ENCODE measurements at regions of chr7 and their contacts with region 1.

Region 1: DNA sequence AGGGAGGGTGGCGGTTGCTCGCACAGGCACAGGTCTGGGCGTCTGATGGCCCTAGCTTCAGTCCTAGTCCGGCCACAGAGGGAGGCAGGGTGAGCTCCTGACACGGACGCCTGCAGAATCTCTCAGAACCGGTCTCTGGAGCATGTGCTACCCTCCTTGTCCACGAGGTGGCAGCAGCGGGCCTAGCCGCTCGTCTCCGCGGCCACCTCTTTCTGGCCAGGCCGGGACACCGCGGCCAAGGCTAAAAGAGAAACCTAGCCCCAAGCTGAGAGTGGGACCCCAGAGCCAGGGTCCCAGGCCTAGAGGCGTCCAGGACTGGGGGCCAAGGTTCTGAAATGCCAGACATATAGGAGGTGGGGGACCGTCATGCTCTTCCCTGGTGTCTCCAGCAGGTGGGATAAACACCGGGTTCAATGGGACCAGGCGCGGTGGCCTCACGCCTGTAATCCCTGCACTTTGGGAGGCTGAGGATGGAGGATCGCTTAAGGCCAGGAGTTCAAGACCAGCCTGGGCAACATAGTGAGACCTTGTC is 3.2 kb upstream of the LAT2 start:
- DNase-seq: no peak
- ATAC-seq: peak; percentile 35
- H3K4me3 ChIP-seq: peak overlapping the region; percentile 44; the same call in 1 of the 2 replicates
- H3K27ac ChIP-seq: 0 out of 2 replicates have a peak overlapping the region, but pooled peaks have one; percentile 7
- H3K4me1 ChIP-seq: peaks cover 36% of the 10 kb centered on the region
- H3K27me3 ChIP-seq: no peaks in the 10 kb centered on the region
- CTCF ChIP-seq: peak; percentile 93 to 95 (median 93)
- EP300 ChIP-seq: no peak
- POLR2A ChIP-seq: no peak
- RAD21 ChIP-seq: peak; percentile 86

Region 2: GRCh38 chr7:73894733-73895551 is 311.7 kb before region 1 on chr7:
- CTCF ChIA-PET with region 1: no interaction called
- POLR2A ChIA-PET with region 1: no interaction called
- RAD21 ChIA-PET with region 1: no interaction called
- SMC1A ChIA-PET with region 1: no interaction called
- in situ Hi-C with region 1: no loop called
- intact Hi-C with region 1: no loop called
- DNase-seq: no peak
- ATAC-seq: no peak
- H3K4me3 ChIP-seq: no peak overlapping the region
- H3K27ac ChIP-seq: no peak overlapping the region
- H3K4me1 ChIP-seq: no peaks in the 10 kb centered on the region
- H3K27me3 ChIP-seq: no peaks in the 10 kb centered on the region
- CTCF ChIP-seq: no peak
- EP300 ChIP-seq: no peak
- POLR2A ChIP-seq: no peak
- RAD21 ChIP-seq: no peak

Region 3: GRCh38 chr7:73960548-73960947 is 246.1 kb before region 1 on chr7:
- CTCF ChIA-PET with region 1: no interaction called
- POLR2A ChIA-PET with region 1: no interaction called
- RAD21 ChIA-PET with region 1: no interaction called
- SMC1A ChIA-PET with region 1: no interaction called
- in situ Hi-C with region 1: no loop called
- intact Hi-C with region 1: no loop called
- DNase-seq: no peak
- ATAC-seq: no peak
- H3K4me3 ChIP-seq: no peak overlapping the region
- H3K27ac ChIP-seq: no peak overlapping the region
- H3K4me1 ChIP-seq: no peaks in the 10 kb centered on the region
- H3K27me3 ChIP-seq: no peaks in the 10 kb centered on the region
- CTCF ChIP-seq: no peak
- EP300 ChIP-seq: no peak
- POLR2A ChIP-seq: no peak
- RAD21 ChIP-seq: no peak

Region 4: GRCh38 chr7:74173866-74174605 is 32.6 kb before region 1 on chr7 and contains the start of gene EIF4H:
- CTCF ChIA-PET with region 1: interaction called, 20 read pairs
- POLR2A ChIA-PET with region 1: interaction called, 5 read pairs
- RAD21 ChIA-PET with region 1: interaction called, 5 read pairs
- SMC1A ChIA-PET with region 1: interaction called, 30 read pairs
- in situ Hi-C with region 1: no loop called
- intact Hi-C with region 1: no loop called
- DNase-seq: peak; percentile 58
- ATAC-seq: peak; percentile 90
- H3K4me3 ChIP-seq: peak within 1 kb of the TSS; percentile 98
- H3K27ac ChIP-seq: peak within 1 kb of the TSS; percentile 80
- H3K4me1 ChIP-seq: peaks cover 6% of the 10 kb centered on the region
- H3K27me3 ChIP-seq: no peaks in the 10 kb centered on the region
- CTCF ChIP-seq: no peak
- EP300 ChIP-seq: 0 out of 4 replicates have a peak, but pooled peaks of 1 of the 2 experiments have one; percentile 14
- POLR2A ChIP-seq: peak; percentile 95
- RAD21 ChIP-seq: no peak
- polyA plus RNA-seq, gene EIF4H: 9.9 to 23.8 TPM

Region 5: DNA sequence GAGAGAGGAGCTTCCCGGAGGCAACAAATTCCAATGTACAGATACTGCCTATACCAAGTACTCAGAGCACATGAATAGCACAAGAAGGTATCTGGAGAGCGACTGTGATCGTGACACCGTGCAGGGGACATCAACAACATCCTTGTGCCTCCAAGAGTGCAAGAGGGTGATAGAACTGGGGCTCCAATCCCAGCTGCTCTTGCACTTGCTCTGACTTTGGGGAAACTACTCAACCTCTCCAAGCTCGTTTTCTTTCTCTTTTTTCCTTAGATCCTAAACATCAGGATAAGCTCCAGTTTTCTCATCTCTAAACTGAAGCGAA is 35.4 kb after region 1 on chr7:
- CTCF ChIA-PET with region 1: interaction called, 15 read pairs
- POLR2A ChIA-PET with region 1: interaction called, 5 read pairs
- RAD21 ChIA-PET with region 1: interaction called, 10 read pairs
- SMC1A ChIA-PET with region 1: interaction called, 3 read pairs
- in situ Hi-C with region 1: no loop called
- intact Hi-C with region 1: no loop called
- DNase-seq: no peak
- ATAC-seq: peak; percentile 56
- H3K4me3 ChIP-seq: no peak overlapping the region; the same call in 1 of the 2 replicates
- H3K27ac ChIP-seq: peak overlapping the region; percentile 3
- H3K4me1 ChIP-seq: peaks cover 7% of the 10 kb centered on the region
- H3K27me3 ChIP-seq: no peaks in the 10 kb centered on the region
- CTCF ChIP-seq: no peak
- EP300 ChIP-seq: no peak
- POLR2A ChIP-seq: no peak
- RAD21 ChIP-seq: no peak

Region 6: GRCh38 chr7:74272305-74273038 is 65.8 kb after region 1 on chr7:
- CTCF ChIA-PET with region 1: interaction called, 29 read pairs
- POLR2A ChIA-PET with region 1: interaction called, 39 read pairs
- RAD21 ChIA-PET with region 1: interaction called, 26 read pairs
- SMC1A ChIA-PET with region 1: interaction called, 17 read pairs
- in situ Hi-C with region 1: no loop called
- intact Hi-C with region 1: loop called (anchors 2 kb)
- DNase-seq: peak; percentile 97
- ATAC-seq: peak; percentile 89
- H3K4me3 ChIP-seq: peak overlapping the region; percentile 19; the same call in 1 of the 2 replicates
- H3K27ac ChIP-seq: peak overlapping the region; percentile 98
- H3K4me1 ChIP-seq: peaks cover 65% of the 10 kb centered on the region
- H3K27me3 ChIP-seq: no peaks in the 10 kb centered on the region
- CTCF ChIP-seq: no peak
- EP300 ChIP-seq: peak; percentile 97 to 99
- POLR2A ChIP-seq: peak; percentile 76
- RAD21 ChIP-seq: 0 out of 2 replicates have a peak, but pooled peaks have one; percentile 32

Region 7: DNA sequence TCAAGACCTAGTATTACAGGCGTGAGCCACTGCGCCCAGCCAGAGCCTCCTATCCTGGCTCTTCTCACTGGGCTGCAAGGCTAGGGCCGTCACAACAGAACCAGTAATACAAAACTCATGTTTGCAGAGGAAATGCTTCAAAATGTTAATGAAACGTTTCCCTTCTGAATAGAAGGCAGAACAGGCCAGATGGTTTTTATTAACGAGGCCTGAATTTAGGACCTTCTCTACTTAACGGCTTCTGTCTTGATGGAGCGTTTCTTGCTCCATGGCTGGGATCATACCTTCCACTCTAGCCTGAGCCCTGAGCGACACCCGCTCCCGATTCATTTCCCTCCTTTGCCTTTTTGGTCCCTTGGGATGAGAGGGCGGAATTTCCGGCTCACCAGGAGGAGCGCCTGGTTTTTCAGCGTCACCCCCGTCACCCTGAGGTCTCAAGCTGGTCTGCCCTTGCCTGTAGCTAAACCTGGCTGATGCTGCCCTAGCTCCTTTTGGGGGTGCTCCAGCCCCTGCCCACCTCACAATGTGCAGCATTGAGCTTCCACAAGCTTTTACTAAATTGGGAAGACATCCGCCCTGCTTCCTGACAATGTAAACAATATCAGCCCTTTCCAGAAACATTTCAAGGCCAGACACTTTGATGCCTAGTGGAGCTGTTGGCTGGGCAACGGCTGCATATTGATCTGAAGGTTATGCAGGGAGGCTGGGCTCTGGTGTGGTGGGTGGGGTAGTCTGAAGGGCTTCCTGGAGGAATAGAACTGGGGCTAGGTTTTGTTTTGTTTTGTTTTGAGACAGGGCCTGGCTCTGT is 87.7 kb after region 1 on chr7:
- CTCF ChIA-PET with region 1: interaction called, 93 read pairs
- POLR2A ChIA-PET with region 1: interaction called, 21 read pairs
- RAD21 ChIA-PET with region 1: interaction called, 41 read pairs
- SMC1A ChIA-PET with region 1: interaction called, 21 read pairs
- in situ Hi-C with region 1: loop called (anchors 5 kb)
- intact Hi-C with region 1: loop called (anchors 5 kb)
- DNase-seq: no peak
- ATAC-seq: no peak
- H3K4me3 ChIP-seq: peak overlapping the region; percentile 97; the same call in 1 of the 2 replicates
- H3K27ac ChIP-seq: no peak overlapping the region; the same call in 1 of the 2 replicates
- H3K4me1 ChIP-seq: peaks cover 23% of the 10 kb centered on the region
- H3K27me3 ChIP-seq: no peaks in the 10 kb centered on the region
- CTCF ChIP-seq: no peak
- EP300 ChIP-seq: no peak
- POLR2A ChIP-seq: no peak
- RAD21 ChIP-seq: no peak

Region 8: GRCh38 chr7:74401137-74401859 is 194.6 kb after region 1 on chr7:
- CTCF ChIA-PET with region 1: interaction called, 190 read pairs
- POLR2A ChIA-PET with region 1: interaction called, 4 read pairs
- RAD21 ChIA-PET with region 1: interaction called, 127 read pairs
- SMC1A ChIA-PET with region 1: interaction called, 86 read pairs
- in situ Hi-C with region 1: loop called (anchors 5 kb)
- intact Hi-C with region 1: loop called (anchors 1 kb)
- DNase-seq: no peak
- ATAC-seq: peak; percentile 79
- H3K4me3 ChIP-seq: no peak overlapping the region
- H3K27ac ChIP-seq: no peak overlapping the region
- H3K4me1 ChIP-seq: no peaks in the 10 kb centered on the region
- H3K27me3 ChIP-seq: no peaks in the 10 kb centered on the region
- CTCF ChIP-seq: peak; percentile 90 to 95 (median 95)
- EP300 ChIP-seq: no peak
- POLR2A ChIP-seq: no peak
- RAD21 ChIP-seq: peak; percentile 88

Region 9: DNA sequence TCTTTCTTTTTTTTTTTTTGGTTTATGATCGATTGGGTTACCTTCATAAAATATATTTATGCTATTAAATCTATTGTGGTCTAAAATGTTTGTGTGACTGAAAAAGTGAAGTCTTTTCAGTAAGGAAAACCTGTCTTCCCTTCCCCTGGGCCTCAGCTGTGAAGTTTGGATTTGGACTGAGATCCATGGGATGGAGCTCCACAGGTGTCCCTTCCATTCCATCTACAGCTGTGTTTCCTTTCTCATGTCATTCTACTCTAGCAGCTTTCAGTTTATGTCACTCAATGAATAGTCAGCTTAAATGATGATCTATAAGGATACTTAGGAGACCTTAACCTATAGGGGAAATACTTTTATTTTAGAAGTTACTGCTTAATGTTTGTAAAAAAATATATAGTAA is 519.2 kb after region 1 on chr7:
- CTCF ChIA-PET with region 1: no interaction called
- POLR2A ChIA-PET with region 1: no interaction called
- RAD21 ChIA-PET with region 1: no interaction called
- SMC1A ChIA-PET with region 1: no interaction called
- in situ Hi-C with region 1: no loop called
- intact Hi-C with region 1: no loop called
- DNase-seq: no peak
- ATAC-seq: no peak
- H3K4me3 ChIP-seq: no peak overlapping the region
- H3K27ac ChIP-seq: no peak overlapping the region
- H3K4me1 ChIP-seq: no peaks in the 10 kb centered on the region
- H3K27me3 ChIP-seq: no peaks in the 10 kb centered on the region
- CTCF ChIP-seq: no peak
- EP300 ChIP-seq: no peak
- POLR2A ChIP-seq: no peak
- RAD21 ChIP-seq: no peak